Posterior cingulate gyrus (tissue), 11 donors: ENCODE measurements at regions of chr20 and their contacts with region 1.

Region 1: GRCh38 chr20:38645980-38646858 is 44.6 kb downstream of the ARHGAP40 start:
- DNase-seq: peak; percentile 63 to 97 (median 82)

Region 2: GRCh38 chr20:38472513-38473372 is 173.5 kb before region 1 on chr20 and contains the start of gene RALGAPB:
- intact Hi-C with region 1: no loop called
- DNase-seq: peak; percentile 95 to 99 (median 97)

Region 3: DNA sequence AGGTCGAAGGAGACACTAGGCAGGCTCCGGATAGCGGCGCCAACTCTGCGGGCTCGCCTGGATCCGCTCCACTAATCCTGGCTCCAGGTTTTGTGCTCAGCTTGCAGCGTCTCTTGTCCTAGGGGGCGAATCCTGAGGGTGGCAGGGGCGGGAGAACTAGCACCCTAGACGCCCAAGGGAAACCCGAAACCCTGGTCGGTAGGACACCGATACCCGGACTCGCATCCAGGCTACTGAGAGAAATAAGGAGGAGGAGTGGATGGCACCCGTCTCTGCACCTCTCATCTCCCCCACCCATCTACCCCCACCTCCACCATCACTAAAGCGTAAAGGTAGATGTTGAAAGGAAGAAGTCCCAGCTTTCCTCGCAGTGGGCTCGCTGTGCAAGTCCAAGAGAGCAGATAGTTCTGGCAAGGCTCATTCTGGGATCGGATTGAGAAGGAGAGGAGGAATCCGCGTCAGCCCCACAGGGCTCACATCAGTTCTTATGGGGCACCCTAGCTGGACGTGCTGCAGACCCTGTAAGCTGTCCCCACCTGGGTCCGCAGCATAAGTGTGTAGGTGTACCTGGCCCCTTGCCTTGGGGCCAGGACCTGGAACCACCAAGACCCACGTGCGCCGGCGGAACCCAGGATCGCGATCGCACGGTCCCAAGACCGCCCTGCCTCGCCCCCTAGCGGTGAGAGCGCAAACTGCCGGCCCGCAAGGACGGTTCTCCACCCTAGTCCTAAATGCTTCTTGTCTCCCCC is 84.9 kb after region 1 on chr20:
- intact Hi-C with region 1: loop called (anchors 5 kb)
- DNase-seq: peak; percentile 57 to 95 (median 78)

Region 4: DNA sequence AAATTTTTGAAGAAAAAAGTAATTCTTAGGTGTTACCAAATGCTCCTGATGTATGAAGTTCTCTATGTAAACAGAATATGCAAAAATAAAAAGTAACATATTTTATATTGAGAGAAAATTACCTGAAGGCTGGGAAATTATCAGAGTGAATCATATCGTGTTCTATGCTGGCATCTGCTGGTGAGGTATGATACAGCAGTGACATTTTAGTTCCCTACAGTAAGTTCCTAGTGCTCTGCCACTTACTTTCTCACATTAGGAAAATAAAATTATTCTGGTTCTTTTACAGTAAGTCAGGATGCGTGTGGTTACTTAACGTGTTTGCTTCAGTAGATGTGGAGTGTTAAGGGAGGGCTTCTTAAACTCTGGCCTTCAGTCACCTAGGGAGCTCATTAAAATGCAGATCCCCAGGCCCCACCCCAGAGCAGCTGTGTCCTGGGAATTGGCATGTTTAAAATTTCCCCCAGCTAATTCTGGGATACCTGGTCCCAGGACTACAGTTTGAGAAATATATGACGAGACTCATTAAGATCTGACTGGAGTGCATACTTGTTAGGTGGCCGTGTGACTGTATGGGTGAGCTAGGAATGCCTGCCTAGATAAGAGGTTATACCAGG is 105.2 kb after region 1 on chr20:
- intact Hi-C with region 1: loop called (anchors 1 kb)
- DNase-seq: no peak

Region 5: GRCh38 chr20:38893565-38894090 is 247.4 kb after region 1 on chr20:
- intact Hi-C with region 1: loop called (anchors 1 kb)
- DNase-seq: peak; percentile 65 to 98 (median 86)

Region 6: GRCh38 chr20:39049684-39050554 is 403.7 kb after region 1 on chr20:
- intact Hi-C with region 1: loop called (anchors 2 kb)
- DNase-seq: peak; percentile 63 to 97 (median 80)

Region 7: DNA sequence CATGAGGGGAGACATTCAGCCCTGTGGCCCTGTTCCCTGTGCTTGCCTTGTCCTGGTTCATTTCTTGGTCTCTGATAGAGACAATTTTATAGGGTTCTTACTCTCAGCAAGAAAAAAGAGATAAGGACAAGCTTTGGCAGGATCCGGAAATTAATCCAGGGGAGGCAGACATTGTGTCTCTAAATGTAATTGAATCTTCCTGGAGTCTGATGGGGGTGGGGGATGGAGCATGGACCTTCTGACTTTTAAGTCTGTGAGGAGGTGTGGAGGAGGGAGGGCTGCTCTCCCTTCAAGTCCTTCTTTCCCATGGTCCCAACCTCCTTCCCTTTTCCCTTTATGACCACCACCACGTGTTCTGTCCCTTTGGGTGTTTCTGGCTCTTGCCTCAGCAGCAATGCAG is 828.7 kb after region 1 on chr20:
- intact Hi-C with region 1: no loop called
- DNase-seq: no peak